Calu3 (cell line): ENCODE measurements at regions of chr14 and their contacts with region 1.

Region 1: DNA sequence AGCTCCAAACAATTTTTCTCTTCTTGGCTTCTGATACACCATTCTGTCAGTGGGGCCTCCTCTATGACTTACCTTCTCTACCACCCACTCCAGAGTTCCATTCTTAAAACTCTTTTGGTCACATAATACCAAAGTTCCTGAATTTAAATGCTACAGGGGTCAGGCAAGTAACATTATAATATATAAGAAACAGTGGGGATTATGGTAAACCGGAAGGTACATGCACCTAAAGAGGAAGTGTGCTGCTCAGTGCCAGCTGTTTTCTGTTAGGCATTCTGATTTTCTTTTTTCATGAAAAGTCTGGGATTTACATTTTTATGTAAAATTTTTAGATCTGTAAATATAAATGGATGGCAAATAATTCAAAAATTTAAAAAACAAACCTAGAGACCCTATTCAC is 39.9 kb downstream of the SOS2 start:
- DNase-seq: no peak
- H3K4me3 Mint-ChIP-seq: no peak overlapping the region
- H3K27ac Mint-ChIP-seq: no peak overlapping the region
- H3K4me1 Mint-ChIP-seq: no peaks in the 10 kb centered on the region
- H3K27me3 Mint-ChIP-seq: no peaks in the 10 kb centered on the region
- CTCF ChIP-seq: no peak

Region 2: GRCh38 chr14:50249136-50249800 is 57.8 kb after region 1 on chr14:
- CTCF ChIA-PET with region 1: interaction called, 10 read pairs
- intact Hi-C with region 1: no loop called
- DNase-seq: no peak
- H3K4me3 Mint-ChIP-seq: no peak overlapping the region
- H3K27ac Mint-ChIP-seq: no peak overlapping the region
- H3K4me1 Mint-ChIP-seq: no peaks in the 10 kb centered on the region
- H3K27me3 Mint-ChIP-seq: no peaks in the 10 kb centered on the region
- CTCF ChIP-seq: no peak